HepG2 (cell line): ENCODE measurements at regions of chr5 and their contacts with region 1.

Region 1: DNA sequence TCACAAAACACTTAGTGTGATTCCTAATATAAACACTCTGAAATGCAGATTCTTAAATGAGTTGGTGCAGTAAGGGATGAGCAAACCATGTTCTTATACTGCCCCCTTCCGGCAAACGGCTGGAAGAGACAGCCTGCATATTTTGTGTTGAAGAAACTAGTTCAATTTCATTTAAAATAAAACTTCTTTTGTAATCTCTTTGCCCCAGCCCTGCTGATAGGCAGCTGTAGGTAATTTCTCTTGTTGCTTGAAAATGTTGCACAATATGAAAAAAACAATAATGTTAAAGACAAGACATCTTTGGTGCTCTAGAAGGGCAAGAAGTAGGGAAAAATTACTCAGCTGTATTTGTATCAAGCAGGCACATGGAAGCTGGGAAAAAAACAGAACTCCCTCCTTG is 89.7 kb upstream of the CCNG1 start:
- DNase-seq: peak; percentile 59
- ATAC-seq: peak; percentile 76
- H3K4me3 ChIP-seq: no peak overlapping the region
- H3K27ac ChIP-seq: no peak overlapping the region
- H3K4me1 ChIP-seq: no peaks in the 10 kb centered on the region
- H3K27me3 ChIP-seq: no peaks in the 10 kb centered on the region
- CTCF ChIP-seq: peak; percentile 75
- EP300 ChIP-seq: no peak
- POLR2A ChIP-seq: no peak
- RAD21 ChIP-seq: 0 out of 2 replicates have a peak, but pooled peaks have one; percentile 36

Region 2: DNA sequence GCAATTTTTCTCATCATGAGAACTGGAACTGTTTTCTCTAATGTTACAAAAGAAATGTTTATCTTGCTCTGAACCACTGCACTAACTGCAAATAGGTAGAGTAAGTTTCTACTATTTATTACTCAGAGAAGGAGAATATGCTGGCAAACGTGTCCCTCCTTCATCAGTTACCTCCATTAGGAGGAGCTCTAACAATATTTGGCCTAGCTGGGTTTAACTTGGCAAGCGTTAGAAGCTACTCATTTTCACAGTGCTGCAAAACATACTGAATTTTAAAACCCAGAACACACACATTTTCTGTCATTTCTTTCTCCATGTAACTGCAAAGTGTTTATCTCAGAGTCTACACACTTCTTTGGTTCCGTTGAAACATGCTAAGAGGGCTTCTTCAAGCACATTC is 1381.1 kb before region 1 on chr5:
- CTCF ChIA-PET with region 1: no interaction called
- POLR2A ChIA-PET with region 1: no interaction called
- in situ Hi-C with region 1: no loop called
- intact Hi-C with region 1: loop called (anchors 2 kb)
- DNase-seq: peak; percentile 3
- ATAC-seq: no peak
- H3K4me3 ChIP-seq: no peak overlapping the region
- H3K27ac ChIP-seq: no peak overlapping the region
- H3K4me1 ChIP-seq: no peaks in the 10 kb centered on the region
- H3K27me3 ChIP-seq: no peaks in the 10 kb centered on the region
- CTCF ChIP-seq: peak; percentile 25; the same call in 1 of the 2 replicates
- EP300 ChIP-seq: no peak
- POLR2A ChIP-seq: no peak
- RAD21 ChIP-seq: no peak

Region 3: GRCh38 chr5:162209005-162209605 is 1138.6 kb before region 1 on chr5:
- CTCF ChIA-PET with region 1: no interaction called
- POLR2A ChIA-PET with region 1: no interaction called
- in situ Hi-C with region 1: no loop called
- intact Hi-C with region 1: loop called (anchors 5 kb)
- DNase-seq: peak; percentile 25
- ATAC-seq: peak; percentile 89
- H3K4me3 ChIP-seq: no peak overlapping the region
- H3K27ac ChIP-seq: no peak overlapping the region
- H3K4me1 ChIP-seq: no peaks in the 10 kb centered on the region
- H3K27me3 ChIP-seq: no peaks in the 10 kb centered on the region
- CTCF ChIP-seq: peak; percentile 39
- EP300 ChIP-seq: no peak
- POLR2A ChIP-seq: no peak
- RAD21 ChIP-seq: no peak

Region 4: DNA sequence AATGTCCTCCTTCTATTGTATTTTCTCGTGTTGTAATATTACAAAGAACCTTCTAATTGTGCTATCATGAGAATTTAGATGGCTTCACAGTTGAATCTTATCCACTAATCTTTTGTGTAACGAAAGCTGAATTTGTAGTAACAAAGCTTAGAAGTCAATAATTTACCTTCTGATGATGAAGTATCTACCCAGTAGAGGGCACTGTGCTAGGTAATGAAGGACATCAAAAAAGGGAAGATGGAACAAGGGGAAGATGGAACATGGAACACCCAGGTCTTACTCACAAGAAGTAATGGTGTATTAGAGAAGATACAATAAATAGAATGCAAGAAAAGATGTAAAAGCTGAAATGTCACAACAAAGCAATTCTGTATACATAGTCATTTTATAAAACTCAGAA is 41.2 kb before region 1 on chr5:
- CTCF ChIA-PET with region 1: interaction called, 8 read pairs
- POLR2A ChIA-PET with region 1: no interaction called
- in situ Hi-C with region 1: no loop called
- intact Hi-C with region 1: loop called (anchors 1 kb)
- DNase-seq: peak; percentile 10
- ATAC-seq: 0 out of 3 replicates have a peak, but pooled peaks have one; percentile 35
- H3K4me3 ChIP-seq: no peak overlapping the region
- H3K27ac ChIP-seq: no peak overlapping the region
- H3K4me1 ChIP-seq: no peaks in the 10 kb centered on the region
- H3K27me3 ChIP-seq: no peaks in the 10 kb centered on the region
- CTCF ChIP-seq: peak; percentile 43; the same call in 1 of the 2 replicates
- EP300 ChIP-seq: no peak
- POLR2A ChIP-seq: no peak
- RAD21 ChIP-seq: no peak